MCF 10A (cell line): ENCODE measurements at regions of chr1 and their contacts with region 1.

Region 1: GRCh38 chr1:207740224-207740623 is 11.6 kb upstream of the CD46 start:
- DNase-seq: peak; percentile 97
- H3K4me3 Mint-ChIP-seq: no peak overlapping the region
- H3K27ac Mint-ChIP-seq: peak overlapping the region; percentile 73
- H3K4me1 Mint-ChIP-seq: peaks cover 43% of the 10 kb centered on the region
- H3K27me3 Mint-ChIP-seq: no peaks in the 10 kb centered on the region
- CTCF ChIP-seq: no peak

Region 2: DNA sequence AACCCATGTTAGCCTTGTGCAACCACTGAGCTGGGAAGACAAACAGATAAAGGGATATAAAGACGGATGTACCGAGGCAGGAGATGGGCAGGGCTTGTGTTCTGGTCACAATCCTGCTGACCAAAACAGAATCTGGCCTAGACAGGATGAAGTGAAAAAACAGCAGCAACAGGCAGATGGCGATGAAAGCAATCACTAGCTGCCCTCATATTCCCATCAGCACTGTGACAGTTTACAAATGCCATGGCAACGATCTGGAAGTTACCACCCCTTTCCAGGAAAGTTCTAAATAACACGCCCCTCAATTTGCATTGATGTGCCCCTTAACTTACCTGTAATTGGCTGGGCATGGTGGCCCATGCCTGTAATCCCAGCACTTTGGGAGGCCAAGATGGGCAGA is 28.9 kb before region 1 on chr1:
- CTCF ChIA-PET with region 1: interaction called, 3 read pairs
- POLR2A ChIA-PET with region 1: interaction called, 13 read pairs
- intact Hi-C with region 1: no loop called
- DNase-seq: peak; percentile 74
- H3K4me3 Mint-ChIP-seq: no peak overlapping the region
- H3K27ac Mint-ChIP-seq: no peak overlapping the region
- H3K4me1 Mint-ChIP-seq: peaks cover 25% of the 10 kb centered on the region
- H3K27me3 Mint-ChIP-seq: no peaks in the 10 kb centered on the region
- CTCF ChIP-seq: peak; percentile 19